ENCODE measurements at regions of chr5 and their contacts with region 1.

Region 1: DNA sequence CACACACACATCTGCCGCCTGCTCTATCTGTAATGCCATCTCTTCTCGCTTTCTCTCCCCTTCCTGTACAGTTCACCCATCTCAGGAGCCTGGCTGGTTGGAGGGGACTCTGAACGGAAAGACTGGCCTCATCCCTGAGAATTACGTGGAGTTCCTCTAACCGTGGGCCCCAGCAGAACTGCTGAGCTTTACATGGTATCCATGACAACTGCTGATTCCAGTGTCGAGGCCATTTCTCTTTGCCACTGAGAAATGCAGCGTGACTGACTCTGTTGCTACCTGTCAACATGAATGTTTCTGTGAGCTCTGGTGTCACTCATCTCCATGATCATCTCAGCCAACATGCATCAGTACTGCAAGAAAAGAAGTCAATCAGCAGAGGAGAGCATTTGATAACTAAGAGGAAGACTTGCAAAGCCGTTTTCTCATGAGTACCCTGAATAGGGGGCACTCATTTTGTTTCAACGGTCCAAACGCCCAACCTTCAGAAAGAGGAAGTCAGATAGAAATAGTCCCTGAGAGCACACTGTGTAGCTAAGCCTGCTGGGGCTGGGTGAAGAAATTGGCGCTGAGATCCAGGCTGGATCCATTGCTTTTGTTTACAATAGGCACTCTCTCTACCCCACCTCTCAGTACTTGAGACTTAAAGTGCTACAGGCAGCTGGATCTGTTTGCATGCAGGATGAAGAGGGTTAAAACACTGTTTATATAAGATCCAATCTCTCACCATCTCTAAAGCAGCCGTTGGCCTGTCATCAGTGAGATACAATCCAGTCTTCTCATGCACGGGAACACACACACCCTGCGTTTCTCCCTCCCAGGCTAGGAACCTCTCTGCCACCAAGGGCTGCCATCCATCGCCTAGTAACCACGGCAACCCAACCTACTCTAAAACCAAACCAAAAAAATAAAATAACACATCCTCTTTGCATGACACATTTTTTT is 180.9 kb downstream of the NR3C1 start:
- DNase-seq: no peak
- H3K4me3 ChIP-seq: no peak overlapping the region
- H3K27ac ChIP-seq: no peak overlapping the region
- H3K4me1 ChIP-seq: peaks cover 20% of the 10 kb centered on the region
- H3K27me3 ChIP-seq: no peaks in the 10 kb centered on the region
- CTCF ChIP-seq: no peak
- POLR2A ChIP-seq: no peak

Region 2: DNA sequence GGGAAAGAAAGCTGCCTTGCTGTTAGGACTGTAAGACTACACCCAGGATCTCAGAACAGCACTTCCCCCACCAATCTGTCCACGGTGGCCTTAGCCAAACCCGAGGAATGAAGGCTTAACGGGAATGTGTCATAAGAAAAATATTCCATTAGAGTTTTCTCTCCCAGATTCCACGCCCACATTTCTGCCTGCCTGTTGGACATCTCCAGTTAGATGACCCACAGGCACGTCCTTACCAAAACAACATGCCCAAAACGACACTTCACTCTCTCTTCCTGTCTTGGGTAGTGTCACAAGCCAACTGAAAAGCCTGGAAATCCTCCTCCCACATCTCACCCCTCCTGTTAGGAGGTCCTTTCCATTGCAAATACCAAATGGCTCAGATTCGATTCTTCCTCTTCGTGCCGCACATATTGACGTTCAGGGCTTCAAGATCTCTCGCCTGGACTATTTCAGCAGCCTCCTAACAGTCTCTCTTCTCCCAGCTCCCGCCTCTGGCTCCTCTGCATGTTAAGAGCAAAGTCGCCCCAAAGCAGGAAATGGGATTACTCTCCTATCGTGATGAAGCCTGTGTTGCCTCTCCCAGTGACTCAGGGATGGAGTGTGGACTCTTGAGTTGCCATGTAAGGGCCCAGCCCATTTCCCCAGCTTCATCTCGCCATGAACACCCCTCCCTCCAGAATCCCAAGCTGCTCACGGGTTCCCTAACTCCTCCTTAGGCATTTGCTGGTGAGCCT is 21.6 kb after region 1 on chr5:
- CTCF ChIA-PET with region 1: interaction called, 7 read pairs
- POLR2A ChIA-PET with region 1: no interaction called
- dilution Hi-C with region 1: no loop called
- intact Hi-C with region 1: loop called (anchors 2 kb)
- DNase-seq: peak; percentile 60
- H3K4me3 ChIP-seq: no peak overlapping the region
- H3K27ac ChIP-seq: peak overlapping the region; percentile 61
- H3K4me1 ChIP-seq: peaks cover 30% of the 10 kb centered on the region
- H3K27me3 ChIP-seq: no peaks in the 10 kb centered on the region
- CTCF ChIP-seq: no peak
- POLR2A ChIP-seq: no peak

Region 3: DNA sequence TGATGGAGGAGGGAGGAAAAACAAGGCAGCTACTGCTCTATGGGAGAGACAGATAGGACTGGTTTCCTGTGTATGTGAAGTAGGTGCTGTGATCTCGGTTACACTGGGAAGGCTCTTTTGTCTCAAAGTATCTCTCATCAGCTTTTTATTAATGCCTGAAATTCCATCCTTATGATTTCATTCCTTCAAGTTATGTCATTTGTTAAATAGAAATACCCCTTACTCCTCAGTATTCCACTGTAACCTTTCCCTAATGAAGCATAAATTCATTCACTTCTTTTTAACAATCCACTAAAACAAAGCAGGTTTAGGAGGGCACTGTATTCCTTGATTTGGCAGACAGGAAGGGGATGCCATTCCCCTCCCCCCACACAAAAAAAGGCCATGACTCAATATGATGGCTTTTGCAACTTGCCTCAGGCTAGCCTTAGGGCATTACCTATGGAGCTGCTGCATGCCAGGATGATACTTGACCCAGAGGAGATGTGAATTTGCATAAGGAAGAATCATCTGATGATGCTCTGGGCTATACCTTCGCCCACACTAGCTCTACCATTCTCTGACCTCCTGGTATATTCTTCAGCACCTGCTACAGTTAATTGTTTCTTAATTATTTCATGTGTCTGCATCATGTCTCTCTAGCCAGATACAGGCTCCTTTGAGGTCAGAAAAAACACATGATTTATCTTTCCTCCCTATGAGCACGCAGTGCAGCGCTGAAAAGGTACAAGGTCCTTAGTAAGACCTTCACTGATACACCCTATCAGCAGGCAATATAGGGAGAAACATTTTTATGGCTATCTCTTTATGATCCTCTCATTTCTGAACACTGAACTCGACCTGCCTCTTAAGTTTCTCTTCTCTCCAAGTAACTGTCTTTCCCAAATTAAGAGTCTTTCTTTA is 154.6 kb after region 1 on chr5:
- CTCF ChIA-PET with region 1: no interaction called
- POLR2A ChIA-PET with region 1: no interaction called
- dilution Hi-C with region 1: loop called (anchors 25 kb)
- intact Hi-C with region 1: no loop called
- DNase-seq: peak; percentile 34
- H3K4me3 ChIP-seq: no peak overlapping the region
- H3K27ac ChIP-seq: no peak overlapping the region
- H3K4me1 ChIP-seq: peaks cover 11% of the 10 kb centered on the region
- H3K27me3 ChIP-seq: no peaks in the 10 kb centered on the region
- CTCF ChIP-seq: no peak
- POLR2A ChIP-seq: no peak